Sigmoid colon (tissue), 7 donors: ENCODE measurements at regions of chr18 and their contacts with region 1.

Region 1: DNA sequence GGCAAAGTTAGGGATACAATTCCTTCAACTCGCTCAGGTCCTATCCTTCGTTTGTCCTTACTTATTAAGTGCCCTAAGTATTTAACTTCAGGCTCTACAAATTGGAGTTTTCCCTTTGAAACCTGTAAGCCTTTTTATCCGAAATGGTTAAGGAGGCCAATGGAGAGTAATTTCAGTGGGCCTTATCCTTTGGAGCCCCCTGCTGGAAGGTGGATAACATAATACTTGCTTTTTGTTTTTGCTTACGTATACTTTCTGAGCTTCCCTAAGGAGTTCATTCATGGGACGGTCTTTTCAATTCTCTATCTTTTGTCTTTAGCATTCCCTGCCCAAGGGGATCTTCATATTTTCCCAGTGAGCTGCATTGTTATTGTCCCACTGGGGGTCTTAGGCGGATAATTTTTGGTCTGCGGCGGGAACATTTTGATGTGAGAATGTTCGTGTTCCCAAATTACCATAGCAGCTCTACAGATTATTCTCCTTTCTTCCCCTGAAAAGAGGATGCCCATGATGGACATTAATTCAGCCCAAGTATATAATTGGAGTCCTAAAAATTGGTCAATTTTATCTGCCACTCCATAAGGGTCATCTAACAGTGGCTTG is 34.4 kb upstream of the TRAPPC8 start:
- DNase-seq: no peak
- H3K4me3 ChIP-seq: no peak overlapping the region
- H3K27ac ChIP-seq: no peak overlapping the region
- H3K4me1 ChIP-seq: no peaks in the 10 kb centered on the region
- H3K27me3 ChIP-seq: no peaks in the 10 kb centered on the region
- CTCF ChIP-seq: peak in 3 of 4 experiments; percentile 13 to 56 (median 40)
- EP300 ChIP-seq: no peak
- POLR2A ChIP-seq: no peak

Region 2: DNA sequence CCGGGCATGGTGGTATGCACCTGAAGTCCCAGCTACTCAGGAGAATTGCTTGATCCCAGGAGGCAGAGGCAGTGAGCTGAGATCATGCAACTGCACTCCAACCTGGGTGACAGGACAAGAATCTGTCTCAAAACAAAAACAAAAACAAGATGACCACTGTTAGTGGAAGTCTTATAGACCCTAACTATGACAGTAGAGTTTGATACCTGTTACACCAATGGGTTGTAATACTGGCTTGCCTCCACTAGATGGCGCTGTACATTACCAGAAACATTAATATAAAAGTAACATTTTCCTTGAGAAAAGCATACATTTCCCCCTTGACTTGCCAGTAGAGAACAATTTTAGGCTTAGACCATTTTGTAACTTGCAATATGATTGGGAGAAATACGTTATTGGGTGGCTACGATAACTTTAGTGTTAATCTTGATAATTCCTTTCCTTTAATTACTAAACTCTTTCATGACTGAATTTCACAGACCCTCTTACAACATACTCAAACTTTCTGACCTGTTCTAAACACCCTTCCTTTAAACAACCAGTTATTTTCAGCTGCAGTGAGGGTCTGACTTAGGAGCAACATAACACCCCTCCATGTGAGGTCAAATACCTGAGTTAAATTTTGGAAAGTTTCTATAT is 236.2 kb before region 1 on chr18:
- intact Hi-C with region 1: loop called (anchors 5 kb)
- DNase-seq: no peak
- H3K4me3 ChIP-seq: no peak overlapping the region
- H3K27ac ChIP-seq: no peak overlapping the region
- H3K4me1 ChIP-seq: no peaks in the 10 kb centered on the region
- H3K27me3 ChIP-seq: no peaks in the 10 kb centered on the region
- CTCF ChIP-seq: peak; percentile 37 to 89 (median 64)
- EP300 ChIP-seq: no peak
- POLR2A ChIP-seq: no peak

Region 3: GRCh38 chr18:31876707-31877106 is 100.7 kb before region 1 on chr18:
- intact Hi-C with region 1: no loop called
- DNase-seq: no peak
- H3K4me3 ChIP-seq: no peak overlapping the region
- H3K27ac ChIP-seq: no peak overlapping the region
- H3K4me1 ChIP-seq: no peaks in the 10 kb centered on the region
- H3K27me3 ChIP-seq: no peaks in the 10 kb centered on the region
- CTCF ChIP-seq: no peak
- EP300 ChIP-seq: no peak
- POLR2A ChIP-seq: no peak

Region 4: DNA sequence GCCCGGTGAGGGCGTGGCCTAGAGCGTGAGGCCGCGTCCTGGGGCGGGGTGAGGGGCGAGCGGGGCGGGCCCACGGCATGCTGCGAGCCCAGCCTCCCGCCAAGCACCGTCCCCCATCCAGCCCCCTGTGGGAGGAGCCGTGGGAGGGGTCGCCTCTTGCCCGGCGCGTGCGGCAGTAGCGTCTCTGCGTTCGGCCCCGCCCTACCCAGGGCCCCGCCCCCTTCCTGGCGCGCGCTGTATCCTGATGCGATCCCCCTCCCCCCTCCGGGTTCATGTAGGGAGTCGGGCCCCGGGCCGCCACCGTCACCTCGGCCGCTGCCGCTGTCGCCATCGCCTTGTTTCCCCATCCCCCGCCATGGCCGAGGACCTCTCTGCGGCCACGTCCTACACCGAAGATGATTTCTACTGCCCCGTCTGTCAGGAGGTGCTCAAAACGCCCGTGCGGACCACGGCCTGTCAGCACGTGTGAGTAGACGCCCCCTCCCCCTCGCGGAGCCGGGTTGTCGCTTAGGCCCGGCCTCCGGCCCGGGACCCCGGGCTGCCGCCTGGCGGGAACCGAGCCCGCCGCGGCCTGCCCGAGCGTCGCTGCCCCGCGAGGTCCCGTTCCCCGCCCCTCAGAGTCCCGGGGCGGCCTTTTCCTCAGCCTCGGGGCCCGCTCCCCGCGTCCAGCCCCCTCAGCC is 115.2 kb after region 1 on chr18:
- intact Hi-C with region 1: no loop called
- DNase-seq: peak; percentile 100
- H3K4me3 ChIP-seq: peak overlapping the region; percentile 69 to 95 (median 78)
- H3K27ac ChIP-seq: peak overlapping the region; percentile 94 to 100 (median 100)
- H3K4me1 ChIP-seq: peaks cover 0 to 37% (median 21%) of the 10 kb centered on the region in 4 donors
- H3K27me3 ChIP-seq: no peaks in the 10 kb centered on the region
- CTCF ChIP-seq: no peak
- EP300 ChIP-seq: peak in 1 of 4 donors; percentile 37
- POLR2A ChIP-seq: peak; percentile 33 to 54

Region 5: GRCh38 chr18:32542221-32542798 is 564.9 kb after region 1 on chr18:
- intact Hi-C with region 1: no loop called
- DNase-seq: no peak
- H3K4me3 ChIP-seq: no peak overlapping the region
- H3K27ac ChIP-seq: no peak overlapping the region
- H3K4me1 ChIP-seq: no peaks in the 10 kb centered on the region
- H3K27me3 ChIP-seq: no peaks in the 10 kb centered on the region
- CTCF ChIP-seq: no peak
- EP300 ChIP-seq: no peak
- POLR2A ChIP-seq: no peak

Region 6: GRCh38 chr18:33051407-33051806 is 1074.0 kb after region 1 on chr18:
- intact Hi-C with region 1: no loop called
- DNase-seq: no peak
- H3K4me3 ChIP-seq: no peak overlapping the region
- H3K27ac ChIP-seq: no peak overlapping the region
- H3K4me1 ChIP-seq: no peaks in the 10 kb centered on the region
- H3K27me3 ChIP-seq: no peaks in the 10 kb centered on the region
- CTCF ChIP-seq: no peak
- EP300 ChIP-seq: no peak
- POLR2A ChIP-seq: no peak